ENCODE measurements at regions of chr1 and their contacts with region 1.

Region 1: GRCh38 chr1:13662493-13662892 is 37.5 kb upstream of the PRDM2 start:
- DNase-seq: no peak
- ATAC-seq: peak; percentile 19

Region 2: GRCh38 chr1:13828454-13829151 is 166.1 kb after region 1 on chr1:
- intact Hi-C with region 1: loop called (anchors 10 kb)
- DNase-seq: peak; percentile 58
- ATAC-seq: peak; percentile 49

Region 3: DNA sequence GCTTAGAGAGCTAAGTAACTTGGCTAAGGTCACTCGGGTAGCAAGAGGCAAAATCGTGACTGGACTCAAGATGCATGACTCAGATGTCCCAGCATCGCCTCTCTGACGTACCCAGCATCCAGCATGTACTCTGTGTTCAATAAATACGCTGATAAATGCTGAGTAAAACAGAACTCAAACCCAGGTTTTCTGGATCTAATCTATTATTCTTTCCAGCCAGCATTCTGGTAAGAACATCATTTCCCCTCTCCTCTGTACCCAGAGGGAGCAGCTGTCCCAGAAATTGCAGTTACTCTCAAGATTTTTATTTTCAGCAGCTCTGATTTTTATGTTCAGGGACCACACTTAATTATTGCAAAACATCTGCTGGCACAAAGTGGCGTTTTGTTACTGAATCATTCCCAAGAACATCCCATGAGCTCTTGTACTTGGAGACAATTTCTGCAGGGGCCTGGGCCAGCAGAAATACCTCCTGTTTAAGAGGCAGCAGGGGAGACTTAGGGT is 286.4 kb after region 1 on chr1:
- intact Hi-C with region 1: no loop called
- DNase-seq: peak; percentile 59
- ATAC-seq: peak; percentile 93

Region 4: GRCh38 chr1:13960375-13960987 is 298.0 kb after region 1 on chr1:
- intact Hi-C with region 1: loop called (anchors 5 kb)
- DNase-seq: peak; percentile 74
- ATAC-seq: peak; percentile 84

Measured in left ventricle myocardium superior (tissue), 1 donor.